Activated naive CD4-positive, alpha-beta T cell treated with anti-CD3 and anti-CD28 coated beads for 36 hours (primary cell): ENCODE measurements at regions of chr21 and their contacts with region 1.

Region 1: DNA sequence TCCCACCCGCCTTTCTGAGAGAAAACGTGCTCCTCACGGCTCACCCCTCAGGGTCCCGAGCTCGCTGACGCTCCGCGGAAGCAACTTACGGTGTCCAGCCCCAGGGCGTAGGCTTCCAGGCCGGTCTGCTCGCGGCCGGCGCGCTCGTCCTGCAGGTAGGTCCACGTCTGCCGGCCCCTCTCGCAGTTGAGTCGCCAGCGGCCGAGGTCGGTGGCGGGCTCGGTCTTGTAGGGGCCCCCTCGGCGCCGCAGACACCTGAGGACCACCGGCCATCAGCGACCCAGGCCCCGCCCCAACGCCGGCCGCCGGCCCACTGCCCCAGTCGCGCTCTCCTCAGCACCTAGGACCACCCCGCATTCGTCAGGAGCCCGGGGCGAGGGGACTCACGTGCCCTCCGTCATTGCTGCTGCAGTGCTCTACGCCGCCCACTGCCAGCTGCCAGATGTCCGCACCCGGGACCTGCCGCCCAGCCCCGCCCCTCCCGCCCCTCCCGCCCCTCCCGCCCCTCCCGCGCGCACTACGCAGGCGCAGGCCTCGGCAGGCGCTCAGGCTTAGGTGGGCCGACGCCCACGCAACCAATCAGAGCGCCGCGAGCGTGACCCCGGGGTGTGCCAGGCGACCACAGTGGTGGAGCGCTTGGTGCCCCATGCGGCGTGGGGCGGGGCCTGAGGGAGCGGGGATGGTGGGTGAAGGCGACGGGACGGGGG is at the start of gene LSS:
- DNase-seq: peak; percentile 95
- H3K4me3 Mint-ChIP-seq: peak within 1 kb of the TSS; percentile 97
- H3K27ac Mint-ChIP-seq: peak within 1 kb of the TSS; percentile 81
- H3K4me1 Mint-ChIP-seq: peaks cover 34% of the 10 kb centered on the region
- H3K27me3 Mint-ChIP-seq: no peaks in the 10 kb centered on the region
- total RNA-seq, gene LSS: 9.6 to 12.6 TPM

Region 2: DNA sequence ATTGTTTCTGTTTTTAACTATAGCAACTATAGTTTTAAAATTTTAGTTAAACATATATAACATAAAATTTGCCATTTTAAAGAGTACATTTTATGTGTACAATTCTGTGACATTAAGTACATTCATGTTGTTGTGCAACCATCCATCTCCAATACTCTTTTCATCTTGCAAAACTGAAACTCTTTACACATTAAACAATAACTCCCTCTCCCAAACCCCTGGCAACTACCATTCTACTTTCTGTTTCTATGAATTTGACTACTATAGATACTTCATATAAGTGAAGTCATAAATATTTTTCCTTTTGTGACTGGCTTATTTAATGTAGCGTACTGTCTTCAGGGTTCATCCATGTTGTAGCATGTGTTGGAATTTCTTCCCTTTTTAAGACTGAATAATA is 559.1 kb before region 1 on chr21:
- CTCF ChIA-PET with region 1: no interaction called
- intact Hi-C with region 1: no loop called
- DNase-seq: no peak
- H3K4me3 Mint-ChIP-seq: no peak overlapping the region
- H3K27ac Mint-ChIP-seq: no peak overlapping the region
- H3K4me1 Mint-ChIP-seq: peaks cover 2% of the 10 kb centered on the region
- H3K27me3 Mint-ChIP-seq: no peaks in the 10 kb centered on the region

Region 3: DNA sequence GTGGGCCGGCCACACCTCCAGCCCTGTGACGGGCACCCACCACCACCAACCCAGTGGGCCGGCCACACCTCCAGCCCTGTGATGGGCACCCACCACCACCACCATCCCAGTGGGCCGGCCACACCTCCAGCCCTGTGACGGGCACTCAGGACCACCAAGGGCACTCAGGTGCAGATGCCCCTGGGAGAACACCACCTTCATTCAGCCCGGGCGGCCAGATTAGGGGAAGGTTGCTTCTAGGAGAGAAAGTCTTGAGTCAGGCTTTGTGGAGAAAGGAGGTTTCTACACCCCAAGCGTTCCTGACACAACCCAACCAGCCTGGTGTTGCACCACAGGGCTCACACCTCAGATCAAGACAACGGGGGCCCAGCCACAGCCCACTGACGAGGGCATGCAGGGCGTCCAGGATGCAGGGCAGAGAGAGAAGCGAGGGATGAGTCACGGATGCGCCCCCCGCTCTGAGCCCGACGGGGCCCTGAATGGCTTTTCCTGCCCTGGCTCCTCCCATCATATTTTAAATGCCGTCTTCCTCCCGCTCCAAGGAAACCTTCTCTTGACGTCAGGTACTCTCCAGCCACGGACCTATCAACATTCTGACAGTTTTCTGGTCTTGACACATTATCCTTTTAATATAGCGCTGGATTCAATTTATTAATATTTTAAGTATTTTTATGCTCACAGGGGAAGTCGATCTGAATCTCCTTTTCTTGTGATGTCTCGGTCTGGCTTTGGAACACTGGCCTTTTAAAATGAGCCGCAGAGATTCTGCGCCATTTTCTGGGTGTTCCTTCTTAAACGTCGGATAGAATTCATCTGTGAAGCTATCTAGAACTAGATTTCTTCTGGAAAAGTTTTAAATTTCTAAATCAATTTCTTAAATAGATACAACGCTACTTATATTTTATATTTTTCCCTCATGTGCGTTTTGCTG is 43.6 kb before region 1 on chr21:
- CTCF ChIA-PET with region 1: no interaction called
- intact Hi-C with region 1: loop called (anchors 2 kb)
- DNase-seq: peak; percentile 66
- H3K4me3 Mint-ChIP-seq: peak overlapping the region; percentile 82
- H3K27ac Mint-ChIP-seq: peak overlapping the region; percentile 73
- H3K4me1 Mint-ChIP-seq: peaks cover 6% of the 10 kb centered on the region
- H3K27me3 Mint-ChIP-seq: no peaks in the 10 kb centered on the region

Region 4: GRCh38 chr21:46253610-46254124 is 25.2 kb after region 1 on chr21:
- CTCF ChIA-PET with region 1: no interaction called
- intact Hi-C with region 1: loop called (anchors 2 kb)
- DNase-seq: peak; percentile 82
- H3K4me3 Mint-ChIP-seq: no peak overlapping the region
- H3K27ac Mint-ChIP-seq: peak overlapping the region; percentile 86
- H3K4me1 Mint-ChIP-seq: peaks cover 34% of the 10 kb centered on the region
- H3K27me3 Mint-ChIP-seq: no peaks in the 10 kb centered on the region

Region 5: GRCh38 chr21:46285761-46286496 is 57.4 kb after region 1 on chr21 and contains the start of gene YBEY:
- CTCF ChIA-PET with region 1: interaction called, 3 read pairs
- intact Hi-C with region 1: loop called (anchors 1 kb)
- DNase-seq: peak; percentile 89
- H3K4me3 Mint-ChIP-seq: peak within 1 kb of the TSS; percentile 98
- H3K27ac Mint-ChIP-seq: peak within 1 kb of the TSS; percentile 96
- H3K4me1 Mint-ChIP-seq: peaks cover 59% of the 10 kb centered on the region
- H3K27me3 Mint-ChIP-seq: no peaks in the 10 kb centered on the region
- total RNA-seq, gene YBEY: 9.9 to 11.0 TPM

Region 6: DNA sequence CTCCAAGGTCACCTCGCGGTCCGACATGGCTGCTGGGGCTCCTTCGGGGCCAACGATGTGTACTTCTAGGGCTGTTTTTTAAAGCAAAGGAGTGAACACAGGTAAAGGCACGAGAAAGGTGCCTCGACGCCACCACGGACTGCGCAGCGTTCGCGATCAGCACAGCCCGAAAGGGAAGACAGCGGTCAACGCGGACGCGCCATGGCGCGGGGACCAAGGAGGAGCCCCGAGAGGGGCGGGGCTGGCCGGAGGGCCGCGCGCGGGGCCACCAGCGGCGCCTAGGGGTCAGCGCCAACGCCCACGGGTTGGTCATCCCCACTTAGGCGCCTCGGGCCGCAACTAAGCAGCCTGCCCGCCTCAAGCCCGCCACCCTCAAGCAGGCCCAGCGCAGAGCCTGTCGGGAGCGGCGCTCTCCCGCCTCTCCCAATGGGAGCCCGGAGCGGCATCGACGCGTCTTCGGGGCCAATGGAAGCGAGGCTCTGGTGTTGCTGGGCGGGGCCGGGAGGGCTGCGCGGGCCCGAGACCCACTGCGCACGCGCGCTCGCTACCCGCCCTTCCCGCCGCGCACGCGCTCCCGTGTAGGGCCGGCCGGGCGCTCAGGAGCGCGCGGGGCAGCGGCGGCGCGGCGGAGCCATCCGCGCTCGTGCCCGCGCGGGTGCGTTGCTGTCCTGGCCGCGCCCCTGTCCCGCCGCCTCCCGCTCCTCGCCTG is 230.0 kb after region 1 on chr21 and contains the start of gene DIP2A:
- CTCF ChIA-PET with region 1: no interaction called
- intact Hi-C with region 1: loop called (anchors 2 kb)
- DNase-seq: peak; percentile 94
- H3K4me3 Mint-ChIP-seq: peak within 1 kb of the TSS; percentile 83
- H3K27ac Mint-ChIP-seq: peak within 1 kb of the TSS; percentile 86
- H3K4me1 Mint-ChIP-seq: peaks cover 36% of the 10 kb centered on the region
- H3K27me3 Mint-ChIP-seq: no peaks in the 10 kb centered on the region
- total RNA-seq, gene DIP2A: 31.4 to 32.7 TPM